ENCODE measurements at regions of chr11 and their contacts with region 1.

Region 1: GRCh38 chr11:72141066-72141465 is 5.5 kb downstream of the FOLR3 start:
- DNase-seq: no peak
- H3K4me3 ChIP-seq: no peak overlapping the region
- H3K4me3 Mint-ChIP-seq: no peak overlapping the region
- H3K27ac Mint-ChIP-seq: no peak overlapping the region
- H3K4me1 ChIP-seq: peaks cover 8% of the 10 kb centered on the region
- H3K4me1 Mint-ChIP-seq: peaks cover 22% of the 10 kb centered on the region
- H3K27me3 ChIP-seq: no peaks in the 10 kb centered on the region
- H3K27me3 Mint-ChIP-seq: no peaks in the 10 kb centered on the region
- CTCF ChIP-seq: no peak

Region 2: DNA sequence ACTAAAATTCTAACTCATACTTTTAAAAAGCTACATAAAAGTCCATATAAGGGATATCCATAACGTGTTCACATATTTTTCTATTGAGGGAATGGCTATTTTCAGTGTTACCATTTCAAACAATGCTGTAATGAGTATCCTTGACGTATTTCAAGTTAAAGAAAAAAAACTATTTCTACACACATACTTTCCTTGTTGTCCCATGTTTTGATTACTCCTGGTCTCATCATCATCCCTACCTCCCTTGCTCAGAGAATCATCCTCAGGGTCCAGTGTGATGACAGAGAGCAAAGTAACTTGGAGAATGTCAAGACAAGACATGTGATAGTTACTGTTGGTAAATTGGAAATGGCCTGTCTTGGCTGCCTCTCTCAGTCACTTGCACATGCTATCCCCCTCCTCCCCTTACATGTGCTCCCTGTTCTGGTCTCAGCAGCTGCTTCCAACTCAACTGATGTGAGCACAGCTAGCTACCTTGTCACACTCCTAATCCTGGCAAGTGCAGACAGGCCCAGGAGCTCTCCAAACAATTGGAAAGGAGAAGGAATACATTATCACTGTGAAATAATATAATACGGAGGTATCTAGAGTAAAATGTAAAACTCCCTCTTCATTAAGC is 82.5 kb before region 1 on chr11:
- CTCF ChIA-PET with region 1: no interaction called
- POLR2A ChIA-PET with region 1: no interaction called
- intact Hi-C with region 1: no loop called
- DNase-seq: no peak
- H3K4me3 ChIP-seq: no peak overlapping the region
- H3K4me3 Mint-ChIP-seq: no peak overlapping the region
- H3K27ac Mint-ChIP-seq: no peak overlapping the region
- H3K4me1 ChIP-seq: no peaks in the 10 kb centered on the region
- H3K4me1 Mint-ChIP-seq: no peaks in the 10 kb centered on the region
- H3K27me3 ChIP-seq: no peaks in the 10 kb centered on the region
- H3K27me3 Mint-ChIP-seq: no peaks in the 10 kb centered on the region
- CTCF ChIP-seq: no peak

Region 3: DNA sequence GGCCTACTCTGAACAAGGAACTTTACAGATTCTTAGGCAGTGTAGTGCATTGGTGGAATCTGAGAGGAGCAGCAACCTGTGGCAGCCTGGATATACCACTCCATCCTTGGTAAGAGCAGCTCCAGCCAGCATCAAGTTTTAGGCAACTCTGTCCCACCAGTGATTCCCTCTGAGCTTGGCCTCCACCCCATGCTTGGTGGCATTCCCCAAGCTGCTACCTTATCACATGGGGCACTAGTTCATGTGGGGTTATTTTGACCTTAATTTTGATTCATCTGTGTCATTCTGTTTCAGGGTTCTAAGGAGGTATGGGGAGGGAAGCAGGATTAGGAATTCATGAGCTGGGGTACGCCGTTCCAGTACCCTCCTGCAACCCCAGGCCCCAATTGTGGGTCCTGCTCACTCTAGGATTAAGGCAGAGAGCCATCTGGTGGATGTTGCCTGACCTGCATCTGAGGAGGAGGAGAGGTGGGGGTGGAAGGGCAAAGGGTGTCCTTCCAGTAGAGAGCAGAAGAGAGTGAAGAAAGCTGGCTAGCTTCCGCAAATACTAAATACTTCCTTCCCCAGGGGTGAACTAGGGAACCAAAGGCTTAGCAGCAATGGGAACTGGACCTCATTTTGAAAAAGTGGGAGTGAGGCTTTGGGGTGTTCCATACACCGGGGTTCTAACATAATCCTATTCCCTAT is 49.9 kb before region 1 on chr11:
- CTCF ChIA-PET with region 1: interaction called, 10 read pairs
- POLR2A ChIA-PET with region 1: interaction called, 3 read pairs
- intact Hi-C with region 1: no loop called
- DNase-seq: peak; percentile 88 to 91
- H3K4me3 ChIP-seq: no peak overlapping the region
- H3K4me3 Mint-ChIP-seq: no peak overlapping the region
- H3K27ac Mint-ChIP-seq: no peak overlapping the region
- H3K4me1 ChIP-seq: peaks cover 6% of the 10 kb centered on the region
- H3K4me1 Mint-ChIP-seq: peaks cover 14% of the 10 kb centered on the region
- H3K27me3 ChIP-seq: no peaks in the 10 kb centered on the region
- H3K27me3 Mint-ChIP-seq: no peaks in the 10 kb centered on the region
- CTCF ChIP-seq: peak; percentile 97 to 99

Region 4: GRCh38 chr11:72102946-72103753 is 37.9 kb before region 1 on chr11 and contains the start of gene LAMTOR1:
- CTCF ChIA-PET with region 1: no interaction called
- POLR2A ChIA-PET with region 1: no interaction called
- intact Hi-C with region 1: loop called (anchors 1 kb)
- DNase-seq: peak; percentile 100
- H3K4me3 ChIP-seq: peak within 1 kb of the TSS; percentile 93
- H3K4me3 Mint-ChIP-seq: peak within 1 kb of the TSS; percentile 97
- H3K27ac Mint-ChIP-seq: peak within 1 kb of the TSS; percentile 98
- H3K4me1 ChIP-seq: peaks cover 18% of the 10 kb centered on the region
- H3K4me1 Mint-ChIP-seq: peaks cover 26% of the 10 kb centered on the region
- H3K27me3 ChIP-seq: no peaks in the 10 kb centered on the region
- H3K27me3 Mint-ChIP-seq: no peaks in the 10 kb centered on the region
- CTCF ChIP-seq: peak; percentile 72 to 79
- total RNA-seq, gene LAMTOR1: 158 and 170 TPM in 2 replicates

Region 5: DNA sequence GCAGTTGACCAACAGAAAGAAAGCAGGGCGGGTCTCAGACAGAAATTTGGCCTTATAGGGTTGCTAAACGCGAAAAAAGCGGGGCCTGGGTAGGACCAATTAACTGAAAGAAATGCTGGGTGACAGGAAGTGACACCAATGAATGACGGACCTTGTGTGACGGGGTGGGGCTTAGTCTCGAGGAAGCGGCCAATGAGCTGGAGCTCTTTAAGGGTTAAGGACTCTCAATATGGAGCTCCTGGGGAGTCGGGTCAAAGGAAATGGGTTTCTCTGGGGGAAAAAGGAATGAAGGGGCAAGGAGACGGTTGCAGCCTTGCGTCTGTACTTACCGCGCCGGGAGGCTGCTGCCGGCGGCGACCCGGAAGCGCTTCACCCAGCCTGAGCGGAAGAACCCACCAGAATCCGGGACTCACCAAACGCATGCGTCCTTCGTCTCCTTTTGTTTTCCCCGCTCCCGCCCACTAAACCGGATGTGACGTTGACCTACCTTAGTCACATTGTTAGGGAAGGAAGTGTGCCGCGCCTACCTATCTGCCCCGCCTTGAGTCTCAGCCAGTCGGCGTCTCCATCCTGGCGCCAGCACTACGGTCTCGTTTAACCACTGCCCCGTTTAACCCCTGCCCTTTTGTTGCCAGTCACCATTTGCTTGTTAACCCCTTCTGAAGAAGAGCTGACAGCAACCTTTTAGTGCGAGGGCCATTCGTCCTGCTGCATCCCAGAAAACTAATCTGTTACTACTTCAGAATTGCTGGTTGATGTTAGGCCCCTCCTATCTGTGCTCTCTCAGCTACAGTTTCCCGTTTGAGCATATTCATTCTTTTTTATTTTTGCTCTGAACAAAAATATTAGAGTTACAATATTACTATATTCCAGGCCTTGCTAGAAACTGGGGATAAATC is 28.5 kb before region 1 on chr11 and contains the start of gene ANAPC15:
- CTCF ChIA-PET with region 1: interaction called, 13 read pairs
- POLR2A ChIA-PET with region 1: interaction called, 15 read pairs
- intact Hi-C with region 1: loop called (anchors 2 kb)
- DNase-seq: peak; percentile 99 to 100
- H3K4me3 ChIP-seq: peak within 1 kb of the TSS; percentile 52
- H3K4me3 Mint-ChIP-seq: peak within 1 kb of the TSS; percentile 94
- H3K27ac Mint-ChIP-seq: peak within 1 kb of the TSS; percentile 100
- H3K4me1 ChIP-seq: peaks cover 9% of the 10 kb centered on the region
- H3K4me1 Mint-ChIP-seq: no peaks in the 10 kb centered on the region
- H3K27me3 ChIP-seq: no peaks in the 10 kb centered on the region
- H3K27me3 Mint-ChIP-seq: no peaks in the 10 kb centered on the region
- CTCF ChIP-seq: no peak
- total RNA-seq, gene ANAPC15: 98.6 and 105 TPM in 2 replicates

Region 6: GRCh38 chr11:72157126-72157525 is 16.1 kb after region 1 on chr11:
- CTCF ChIA-PET with region 1: interaction called, 10 read pairs
- POLR2A ChIA-PET with region 1: interaction called, 5 read pairs
- intact Hi-C with region 1: no loop called
- DNase-seq: no peak
- H3K4me3 ChIP-seq: no peak overlapping the region
- H3K4me3 Mint-ChIP-seq: no peak overlapping the region
- H3K27ac Mint-ChIP-seq: no peak overlapping the region
- H3K4me1 ChIP-seq: peaks cover under 1% of the 10 kb centered on the region
- H3K4me1 Mint-ChIP-seq: no peaks in the 10 kb centered on the region
- H3K27me3 ChIP-seq: no peaks in the 10 kb centered on the region
- H3K27me3 Mint-ChIP-seq: no peaks in the 10 kb centered on the region
- CTCF ChIP-seq: no peak

Region 7: GRCh38 chr11:72179804-72180396 is 38.8 kb after region 1 on chr11:
- CTCF ChIA-PET with region 1: interaction called, 22 read pairs
- POLR2A ChIA-PET with region 1: no interaction called
- intact Hi-C with region 1: loop called (anchors 1 kb)
- DNase-seq: no peak
- H3K4me3 ChIP-seq: no peak overlapping the region
- H3K4me3 Mint-ChIP-seq: no peak overlapping the region
- H3K27ac Mint-ChIP-seq: peak overlapping the region; percentile 40
- H3K4me1 ChIP-seq: peaks cover 24% of the 10 kb centered on the region
- H3K4me1 Mint-ChIP-seq: peaks cover 27% of the 10 kb centered on the region
- H3K27me3 ChIP-seq: no peaks in the 10 kb centered on the region
- H3K27me3 Mint-ChIP-seq: no peaks in the 10 kb centered on the region
- CTCF ChIP-seq: no peak

Region 8: GRCh38 chr11:72507050-72507449 is 366.0 kb after region 1 on chr11:
- CTCF ChIA-PET with region 1: no interaction called
- POLR2A ChIA-PET with region 1: no interaction called
- intact Hi-C with region 1: no loop called
- DNase-seq: no peak
- H3K4me3 ChIP-seq: no peak overlapping the region
- H3K4me3 Mint-ChIP-seq: no peak overlapping the region
- H3K27ac Mint-ChIP-seq: no peak overlapping the region
- H3K4me1 ChIP-seq: no peaks in the 10 kb centered on the region
- H3K4me1 Mint-ChIP-seq: peaks cover 7% of the 10 kb centered on the region
- H3K27me3 ChIP-seq: no peaks in the 10 kb centered on the region
- H3K27me3 Mint-ChIP-seq: peaks cover 6% of the 10 kb centered on the region
- CTCF ChIP-seq: no peak

Region 9: DNA sequence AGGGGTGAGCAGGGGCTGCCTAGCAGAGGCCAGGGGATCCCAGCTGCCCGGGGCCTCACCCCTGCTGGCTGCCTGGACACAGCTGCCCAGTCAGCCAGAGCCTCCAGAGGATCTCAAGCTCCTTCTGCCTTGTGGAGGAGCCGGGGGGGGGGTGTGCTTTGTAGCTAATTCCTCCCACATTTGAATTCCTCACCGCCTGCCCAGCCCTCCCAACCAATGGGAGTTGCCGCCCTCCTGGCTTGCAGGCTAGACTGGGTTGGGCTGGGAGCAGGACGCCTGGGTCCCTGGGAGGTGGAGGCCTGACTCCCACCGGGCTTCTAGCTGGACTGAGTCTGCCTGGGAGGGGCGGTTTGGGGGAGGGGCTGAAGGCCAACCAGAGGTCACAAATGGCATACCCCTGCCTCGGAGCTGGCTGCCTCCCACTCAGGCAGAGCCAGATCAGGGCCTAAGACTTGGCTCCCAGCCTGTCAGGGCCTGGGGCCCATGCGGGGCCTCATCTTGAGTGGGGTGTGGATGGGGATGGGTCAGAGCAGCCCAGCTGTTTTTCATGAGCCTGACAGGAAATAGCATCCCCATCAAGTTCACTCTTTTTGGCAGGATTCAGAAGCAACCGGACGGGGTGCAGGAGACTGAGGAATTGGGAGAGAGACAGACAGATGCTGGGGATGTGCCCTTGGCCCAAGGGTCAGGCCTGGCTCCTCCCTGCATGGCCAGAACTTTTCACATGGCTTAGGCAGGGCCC is 562.4 kb after region 1 on chr11:
- CTCF ChIA-PET with region 1: no interaction called
- POLR2A ChIA-PET with region 1: no interaction called
- intact Hi-C with region 1: no loop called
- DNase-seq: no peak
- H3K4me3 ChIP-seq: no peak overlapping the region
- H3K4me3 Mint-ChIP-seq: no peak overlapping the region
- H3K27ac Mint-ChIP-seq: no peak overlapping the region
- H3K4me1 ChIP-seq: no peaks in the 10 kb centered on the region
- H3K4me1 Mint-ChIP-seq: no peaks in the 10 kb centered on the region
- H3K27me3 ChIP-seq: no peaks in the 10 kb centered on the region
- H3K27me3 Mint-ChIP-seq: no peaks in the 10 kb centered on the region
- CTCF ChIP-seq: no peak